ENCODE measurements at regions of chrX and their contacts with region 1.

Region 1: DNA sequence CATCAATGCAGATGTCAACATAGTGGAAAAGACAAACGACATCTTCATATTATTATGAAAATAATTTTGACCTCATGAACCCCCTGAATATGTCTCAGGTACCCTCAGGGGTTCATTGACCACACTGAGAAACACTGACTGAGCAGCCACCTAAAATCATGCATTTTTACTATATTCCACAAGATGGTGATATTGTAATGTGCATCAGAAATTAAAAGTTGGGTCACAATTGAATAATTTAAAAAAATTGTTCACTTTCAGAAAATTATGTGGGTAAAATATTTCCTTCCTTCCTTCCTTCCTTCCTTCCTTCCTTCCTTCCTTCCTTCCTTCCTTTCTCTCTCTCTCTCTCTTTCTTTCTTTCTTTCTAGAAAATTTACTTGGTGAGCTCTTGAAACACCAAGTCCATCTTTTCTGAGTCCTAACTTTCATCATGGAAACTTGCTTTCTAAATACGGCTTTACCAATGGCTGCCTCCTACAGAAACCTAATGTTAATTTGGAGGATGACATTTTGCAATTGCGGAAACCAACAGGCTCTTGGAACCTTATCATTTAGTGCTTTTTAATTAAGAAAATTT is 103.6 kb downstream of the RTL3 start:
- DNase-seq: no peak
- ATAC-seq: no peak
- H3K4me3 ChIP-seq: no peak overlapping the region
- H3K27ac ChIP-seq: no peak overlapping the region
- H3K4me1 ChIP-seq: no peaks in the 10 kb centered on the region
- H3K27me3 ChIP-seq: no peaks in the 10 kb centered on the region
- CTCF ChIP-seq: peak; percentile 6 to 60 (median 45)

Region 2: DNA sequence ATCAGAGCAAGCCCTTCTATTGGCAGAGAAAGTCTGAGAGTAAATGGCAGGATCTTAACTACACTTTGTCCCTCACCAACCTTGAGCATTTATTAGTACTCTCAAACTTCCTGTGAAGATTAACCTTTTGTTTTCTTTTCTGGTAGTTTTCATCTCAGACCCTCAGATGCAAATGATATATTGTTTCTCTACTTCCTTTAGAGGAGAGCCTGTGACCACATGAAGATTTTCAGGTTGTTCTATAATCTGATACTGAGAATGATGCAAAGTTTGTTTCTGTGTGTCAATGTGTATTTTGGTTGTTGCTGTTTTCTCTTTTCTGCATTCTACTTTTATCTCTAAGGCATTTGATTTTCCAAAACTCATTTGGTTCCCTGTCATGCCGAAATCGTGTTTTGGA is 62.3 kb before region 1 on chrX:
- intact Hi-C with region 1: no loop called
- DNase-seq: no peak
- ATAC-seq: no peak
- H3K4me3 ChIP-seq: no peak overlapping the region
- H3K27ac ChIP-seq: no peak overlapping the region
- H3K4me1 ChIP-seq: no peaks in the 10 kb centered on the region
- H3K27me3 ChIP-seq: peaks cover 0 to 36% (median 0%) of the 10 kb centered on the region in 7 donors
- CTCF ChIP-seq: no peak

Region 3: GRCh38 chrX:78886550-78886949 is 331.1 kb after region 1 on chrX:
- intact Hi-C with region 1: loop called in 1 of 10 experiments (anchors 5 kb)
- DNase-seq: no peak
- ATAC-seq: no peak
- H3K4me3 ChIP-seq: no peak overlapping the region
- H3K27ac ChIP-seq: no peak overlapping the region
- H3K4me1 ChIP-seq: no peaks in the 10 kb centered on the region
- H3K27me3 ChIP-seq: no peaks in the 10 kb centered on the region
- CTCF ChIP-seq: peak in 7 of 9 donors; percentile 21 to 47 (median 39)

Region 4: DNA sequence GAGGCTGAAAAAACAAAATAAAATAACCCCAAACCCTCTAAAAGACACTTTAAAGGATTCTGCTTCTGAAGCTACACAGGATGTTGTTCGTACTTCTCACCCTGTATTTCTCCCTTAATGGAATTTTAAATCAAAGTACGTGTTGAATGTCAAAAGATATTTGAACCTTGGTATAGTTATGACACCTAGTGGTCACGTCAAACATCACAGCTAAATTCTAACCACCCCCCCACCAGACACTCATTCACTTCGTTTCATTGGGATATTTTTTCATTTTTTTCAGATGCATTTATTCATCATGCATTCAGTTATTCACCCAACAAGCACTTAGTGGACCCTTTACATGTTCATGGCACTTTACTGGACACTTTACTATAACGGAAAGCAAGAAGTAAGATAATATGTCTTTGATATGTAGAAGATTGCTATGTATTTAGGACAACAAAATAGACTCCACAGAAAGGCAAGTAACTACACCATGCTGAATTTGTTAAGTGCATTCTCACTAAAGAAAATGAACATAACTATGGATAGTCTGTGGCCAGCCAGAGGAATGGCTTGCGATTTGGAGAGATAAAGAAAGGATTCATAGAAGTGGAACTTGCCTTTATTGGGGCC is 526.5 kb after region 1 on chrX:
- intact Hi-C with region 1: loop called in 9 of 10 experiments (anchors 5 to 10 kb)
- DNase-seq: peak in 1 of 2 donors; percentile 6
- ATAC-seq: peak in 5 of 8 donors; percentile 23 to 61 (median 50)
- H3K4me3 ChIP-seq: no peak overlapping the region
- H3K27ac ChIP-seq: peak overlapping the region in 1 of 10 donors; percentile 22
- H3K4me1 ChIP-seq: peaks cover 0 to 7% (median 0%) of the 10 kb centered on the region in 9 donors
- H3K27me3 ChIP-seq: peaks cover 0 to 14% (median 0%) of the 10 kb centered on the region in 7 donors
- CTCF ChIP-seq: peak; percentile 26 to 69 (median 62)